ENCODE measurements at regions of chr1 and their contacts with region 1.

Region 1: GRCh38 chr1:108049178-108049819 is 84.3 kb upstream of the VAV3 start:
- DNase-seq: peak in 1 of 2 donors; percentile 15
- ATAC-seq: peak in 1 of 2 donors; percentile 49
- H3K4me3 ChIP-seq: no peak overlapping the region
- H3K27ac ChIP-seq: no peak overlapping the region
- H3K4me1 ChIP-seq: peaks cover 14 to 28% of the 10 kb centered on the region in 2 donors
- H3K27me3 ChIP-seq: peaks cover 0 to 3% (median 3%) of the 10 kb centered on the region in 3 donors
- CTCF ChIP-seq: peak in 1 of 5 experiments; percentile 24
- POLR2A ChIP-seq: no peak

Region 2: DNA sequence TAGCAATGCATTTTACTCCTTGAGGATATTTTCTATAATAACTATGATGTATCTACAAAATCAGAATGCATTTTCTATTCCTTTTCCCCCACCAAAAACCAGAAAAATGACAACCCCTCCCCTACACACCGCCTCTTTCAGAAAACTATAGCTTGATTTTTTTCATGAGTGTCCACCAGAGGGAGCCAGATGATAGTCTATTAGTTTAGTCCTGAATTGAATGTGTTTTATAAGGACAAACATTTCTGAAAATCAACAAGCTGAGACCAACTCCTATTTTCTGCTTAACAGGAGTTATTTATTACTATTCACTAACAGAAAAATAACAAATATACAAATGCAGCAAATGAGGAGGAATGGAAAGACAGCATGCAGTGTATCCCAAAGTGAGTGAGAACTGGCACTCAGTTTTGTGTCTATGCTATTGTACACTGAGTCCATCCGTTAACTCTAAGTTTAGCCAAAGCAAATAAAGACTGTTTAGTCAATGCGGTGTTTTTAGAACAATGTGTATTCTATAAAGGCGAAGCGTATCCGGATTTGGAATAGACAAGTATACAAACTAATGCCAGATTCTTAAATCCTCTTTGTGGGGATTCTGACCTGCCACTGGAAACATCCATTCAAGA is 267.0 kb before region 1 on chr1:
- in situ Hi-C with region 1: no loop called
- intact Hi-C with region 1: loop called (anchors 5 kb)
- DNase-seq: no peak
- ATAC-seq: peak; percentile 65 to 70
- H3K4me3 ChIP-seq: no peak overlapping the region
- H3K27ac ChIP-seq: no peak overlapping the region
- H3K4me1 ChIP-seq: no peaks in the 10 kb centered on the region
- H3K27me3 ChIP-seq: no peaks in the 10 kb centered on the region
- CTCF ChIP-seq: peak; percentile 59 to 75 (median 67)
- POLR2A ChIP-seq: no peak

Region 3: DNA sequence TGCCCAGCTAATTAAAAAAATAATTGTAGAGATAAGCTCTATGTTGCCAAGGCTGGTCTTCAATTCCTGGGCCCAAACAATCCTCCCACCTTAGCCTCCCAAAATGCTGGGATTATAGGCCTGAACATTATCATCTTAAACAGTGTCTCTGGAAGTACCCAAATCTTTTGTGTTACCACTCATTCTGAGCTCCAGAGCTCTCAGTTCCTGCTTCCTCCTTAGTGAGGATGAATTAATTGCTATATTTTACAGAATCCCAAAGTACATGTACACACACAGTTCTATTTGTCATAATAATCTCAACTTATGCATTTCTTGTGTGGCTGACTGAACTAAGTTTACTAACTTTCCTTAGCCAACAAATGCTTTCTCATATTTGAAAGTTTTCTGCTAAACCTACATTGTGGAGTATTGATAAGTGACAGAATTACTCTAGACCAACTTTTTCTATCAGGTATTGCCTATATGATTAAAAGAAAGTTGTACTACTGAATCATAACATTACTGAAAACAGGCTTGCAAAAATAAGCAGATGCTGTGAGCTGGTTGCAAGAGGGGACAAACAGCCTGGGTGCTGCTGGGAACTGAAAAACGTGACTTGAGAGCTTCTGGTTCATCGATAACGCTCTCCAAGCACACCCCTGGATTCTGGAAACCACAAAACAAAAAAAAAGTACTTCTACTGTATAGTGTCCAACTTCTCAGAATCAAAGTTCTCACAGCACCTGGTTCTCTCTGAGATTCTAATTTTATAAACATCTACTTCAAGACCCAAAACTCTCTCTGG is 99.6 kb before region 1 on chr1:
- in situ Hi-C with region 1: no loop called
- intact Hi-C with region 1: loop called (anchors 5 kb)
- DNase-seq: no peak
- ATAC-seq: no peak
- H3K4me3 ChIP-seq: no peak overlapping the region
- H3K27ac ChIP-seq: no peak overlapping the region
- H3K4me1 ChIP-seq: peaks cover 10 to 14% of the 10 kb centered on the region in 2 donors
- H3K27me3 ChIP-seq: no peaks in the 10 kb centered on the region
- CTCF ChIP-seq: no peak
- POLR2A ChIP-seq: no peak

Region 4: DNA sequence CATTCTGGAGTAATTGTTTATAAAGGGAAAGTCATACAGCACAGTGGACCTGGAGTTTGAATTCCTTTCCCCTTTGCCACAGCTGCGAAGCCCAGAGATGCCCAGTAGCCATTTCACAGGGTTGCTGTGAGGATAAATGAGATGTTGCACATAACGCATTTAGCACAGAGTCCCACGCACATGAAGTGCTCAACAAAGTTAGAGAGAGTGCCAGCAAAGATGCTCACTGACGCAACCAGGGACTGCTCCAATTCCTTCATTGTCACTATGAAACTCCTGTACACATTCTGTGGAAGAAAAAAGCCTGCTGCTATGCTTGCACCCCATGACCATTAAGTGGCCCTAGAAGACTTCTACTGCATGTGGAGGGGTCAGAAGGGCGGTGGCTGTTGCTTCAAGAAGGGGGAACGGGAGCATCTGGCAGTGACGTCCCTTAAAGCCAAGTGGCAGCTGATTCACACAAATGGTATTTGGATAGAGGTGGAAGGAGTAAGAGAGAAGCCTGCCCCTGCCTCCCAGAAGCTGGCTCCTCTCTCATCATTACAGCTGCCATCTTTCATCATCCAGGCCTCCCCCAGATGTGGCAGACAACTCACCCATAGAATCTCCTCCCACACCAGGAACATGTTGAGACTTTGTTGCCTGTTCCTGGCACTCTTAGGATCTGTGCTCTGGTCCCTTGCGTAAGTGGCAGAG is 57.8 kb before region 1 on chr1:
- in situ Hi-C with region 1: no loop called
- intact Hi-C with region 1: loop called (anchors 10 kb)
- DNase-seq: peak in 1 of 2 donors; percentile 19
- ATAC-seq: peak; percentile 49 to 68
- H3K4me3 ChIP-seq: no peak overlapping the region
- H3K27ac ChIP-seq: no peak overlapping the region
- H3K4me1 ChIP-seq: no peaks in the 10 kb centered on the region
- H3K27me3 ChIP-seq: no peaks in the 10 kb centered on the region
- CTCF ChIP-seq: no peak
- POLR2A ChIP-seq: no peak

Measured in gastrocnemius medialis (tissue), 4 donors.